Ascending aorta (tissue), 2 donors: ENCODE measurements at regions of chr10 and their contacts with region 1.

Region 1: DNA sequence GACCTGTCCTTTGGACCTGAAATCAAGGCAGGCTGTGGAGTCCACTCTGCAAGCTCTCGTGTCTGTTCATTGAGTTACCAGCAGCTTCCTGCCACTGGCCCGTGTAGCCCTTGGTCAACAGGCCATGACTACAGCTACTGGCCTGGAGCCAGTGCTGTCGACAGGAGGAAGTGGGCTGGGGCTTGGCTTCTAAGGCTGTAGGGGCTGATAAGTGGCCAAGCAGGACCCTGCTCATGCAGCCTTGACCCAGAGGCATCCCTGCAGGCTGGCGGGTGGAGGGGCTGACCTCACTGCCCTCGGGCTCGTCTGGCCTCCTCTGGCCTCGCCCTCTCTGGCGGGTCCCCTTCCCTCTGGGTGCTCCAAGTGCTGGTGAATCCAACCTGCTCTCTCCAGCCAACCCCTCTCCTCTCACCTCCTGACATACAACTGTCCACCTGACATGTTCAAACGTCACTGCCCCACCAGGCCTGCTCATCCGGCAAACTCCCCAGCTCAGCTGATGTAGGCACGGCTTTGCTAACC is 188.5 kb upstream of the LYZL2 start:
- DNase-seq: peak; percentile 43 to 87
- H3K4me3 ChIP-seq: peak overlapping the region in 1 of 2 donors; percentile 67
- H3K27ac ChIP-seq: peak overlapping the region; percentile 90 to 94
- H3K4me1 ChIP-seq: peaks cover 6 to 45% of the 10 kb centered on the region in 2 donors
- H3K27me3 ChIP-seq: no peaks in the 10 kb centered on the region
- CTCF ChIP-seq: no peak

Region 2: DNA sequence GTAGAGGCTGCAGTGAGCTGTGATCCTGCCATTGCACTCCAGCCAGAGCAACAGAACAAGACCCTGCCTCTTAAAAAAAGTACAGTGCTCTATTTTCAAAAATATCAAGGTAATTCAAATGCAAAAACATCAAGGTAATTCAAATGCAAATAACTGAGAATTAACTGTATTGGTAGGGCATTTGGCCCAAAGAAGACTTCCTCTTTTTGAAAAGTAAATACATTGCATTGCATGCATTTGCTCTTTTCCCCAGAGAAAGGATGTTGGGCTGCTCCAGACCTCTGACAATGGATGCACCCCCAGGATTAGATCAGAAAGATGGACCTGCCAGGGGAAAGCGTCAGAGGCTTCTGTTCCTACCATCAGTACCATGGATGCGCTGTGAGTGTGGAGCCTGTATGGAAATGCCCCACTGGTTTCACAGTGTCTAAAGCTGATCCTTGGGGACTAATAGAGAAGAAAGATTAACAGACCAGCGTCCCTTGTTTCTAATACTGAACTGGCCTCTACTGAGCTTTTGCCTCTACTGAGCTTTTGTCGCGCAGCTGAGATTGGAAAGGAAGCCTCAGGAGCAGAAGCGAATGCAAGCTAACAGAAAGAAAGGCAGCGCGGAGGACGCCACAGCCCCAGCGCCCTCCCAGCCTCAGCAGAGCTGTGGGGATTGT is 95.0 kb before region 1 on chr10:
- intact Hi-C with region 1: no loop called
- DNase-seq: no peak
- H3K4me3 ChIP-seq: no peak overlapping the region
- H3K27ac ChIP-seq: no peak overlapping the region
- H3K4me1 ChIP-seq: peaks cover 0 to 2% of the 10 kb centered on the region in 2 donors
- H3K27me3 ChIP-seq: no peaks in the 10 kb centered on the region
- CTCF ChIP-seq: no peak

Region 3: DNA sequence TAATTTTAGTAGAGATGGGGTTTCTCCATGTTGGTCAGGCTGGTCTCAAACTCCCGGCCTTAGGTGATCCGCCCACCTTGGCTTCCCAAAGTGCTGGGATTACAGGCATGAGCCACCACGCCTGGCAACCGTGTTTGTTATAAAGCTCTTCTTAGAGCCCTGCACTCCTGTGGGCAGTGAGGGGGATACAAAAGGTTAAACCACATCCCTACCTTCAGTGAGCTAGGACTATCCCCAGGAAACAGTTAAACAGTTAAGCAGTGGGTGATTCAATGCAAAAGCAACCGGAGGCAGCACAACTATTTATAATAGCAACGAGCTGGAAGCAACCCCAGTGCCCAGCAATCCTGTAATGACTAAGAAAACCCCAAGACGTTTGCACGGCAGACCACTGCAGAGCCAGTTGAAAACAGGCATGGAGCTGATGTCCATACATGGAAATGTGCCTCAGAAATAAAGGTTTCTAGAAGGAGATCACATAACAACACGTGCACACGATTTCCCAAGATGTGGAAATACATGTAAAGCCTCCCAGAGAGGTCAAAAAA is 81.3 kb before region 1 on chr10:
- intact Hi-C with region 1: loop called (anchors 2 kb)
- DNase-seq: peak; percentile 58 to 93
- H3K4me3 ChIP-seq: no peak overlapping the region
- H3K27ac ChIP-seq: peak overlapping the region; percentile 63 to 67
- H3K4me1 ChIP-seq: peaks cover 10 to 12% of the 10 kb centered on the region in 2 donors
- H3K27me3 ChIP-seq: no peaks in the 10 kb centered on the region
- CTCF ChIP-seq: no peak

Region 4: DNA sequence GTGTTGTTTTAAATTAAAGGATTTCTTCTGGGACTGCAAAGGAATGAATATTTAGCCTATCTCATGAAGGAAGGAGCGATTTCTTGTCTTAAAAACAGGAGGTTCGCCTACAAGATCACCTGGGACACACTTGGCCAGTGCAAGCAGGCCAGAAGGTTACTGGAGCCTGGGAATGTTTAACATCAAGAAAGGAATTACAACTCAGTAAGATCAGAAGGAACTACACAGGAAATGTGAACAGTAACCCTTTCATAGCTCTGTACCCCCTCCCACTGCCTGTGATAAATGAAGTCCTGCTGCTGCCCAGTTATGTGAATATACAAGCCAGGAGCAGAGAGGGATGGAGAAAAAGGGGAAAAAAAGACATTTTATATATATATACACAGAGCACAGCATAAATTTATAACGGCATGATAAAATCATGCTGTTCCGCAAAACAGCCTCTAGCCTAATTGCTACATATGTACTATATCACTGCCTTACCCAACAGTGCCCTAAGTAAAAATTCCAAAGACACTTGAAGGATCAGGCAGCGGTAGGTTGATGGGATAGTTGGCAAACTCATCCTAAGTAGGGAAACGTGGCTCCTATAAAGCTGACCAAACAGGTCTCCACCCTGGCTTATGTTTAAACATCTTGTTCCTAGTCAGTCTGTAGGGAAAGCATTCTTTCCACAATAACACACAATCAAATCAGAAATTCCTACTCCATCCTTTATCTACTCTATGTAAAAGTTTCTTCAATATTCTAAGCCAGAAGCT is 149.8 kb after region 1 on chr10:
- intact Hi-C with region 1: no loop called
- DNase-seq: no peak
- H3K4me3 ChIP-seq: no peak overlapping the region
- H3K27ac ChIP-seq: no peak overlapping the region
- H3K4me1 ChIP-seq: peaks cover 0 to 16% of the 10 kb centered on the region in 2 donors
- H3K27me3 ChIP-seq: no peaks in the 10 kb centered on the region
- CTCF ChIP-seq: no peak

Region 5: GRCh38 chr10:30986053-30986555 is 168.0 kb after region 1 on chr10:
- intact Hi-C with region 1: loop called (anchors 5 kb)
- DNase-seq: no peak
- H3K4me3 ChIP-seq: no peak overlapping the region
- H3K27ac ChIP-seq: peak overlapping the region in 1 of 2 donors; percentile 28
- H3K4me1 ChIP-seq: peaks cover 9 to 40% of the 10 kb centered on the region in 2 donors
- H3K27me3 ChIP-seq: no peaks in the 10 kb centered on the region
- CTCF ChIP-seq: no peak